ENCODE measurements at regions of chr1 and their contacts with region 1.

Region 1: GRCh38 chr1:155091071-155091709 is 12.6 kb downstream of the EFNA3 start:
- DNase-seq: peak; percentile 81 to 88
- ATAC-seq: peak; percentile 74 to 88 (median 80)
- H3K4me3 ChIP-seq: no peak overlapping the region
- H3K27ac ChIP-seq: no peak overlapping the region
- H3K4me1 ChIP-seq: peaks cover 12% of the 10 kb centered on the region
- H3K27me3 ChIP-seq: no peaks in the 10 kb centered on the region
- CTCF ChIP-seq: peak; percentile 97

Region 2: GRCh38 chr1:155050560-155051341 is 40.4 kb before region 1 on chr1 and contains the start of gene ADAM15:
- intact Hi-C with region 1: no loop called
- DNase-seq: peak; percentile 88 to 93
- ATAC-seq: peak; percentile 87 to 89 (median 88)
- H3K4me3 ChIP-seq: peak within 1 kb of the TSS; percentile 88
- H3K27ac ChIP-seq: peak within 1 kb of the TSS; percentile 86
- H3K4me1 ChIP-seq: peaks cover 23% of the 10 kb centered on the region
- H3K27me3 ChIP-seq: no peaks in the 10 kb centered on the region
- CTCF ChIP-seq: peak; percentile 93
- total RNA-seq, gene ADAM15: 38.4 to 50.9 (median 49.3) TPM

Region 3: GRCh38 chr1:155127105-155127964 is 36.1 kb after region 1 on chr1 and contains the start of gene EFNA1:
- intact Hi-C with region 1: loop called (anchors 5 kb)
- DNase-seq: peak; percentile 70 to 77
- ATAC-seq: peak; percentile 46 to 64 (median 51)
- H3K4me3 ChIP-seq: peak within 1 kb of the TSS; percentile 74
- H3K27ac ChIP-seq: peak within 1 kb of the TSS; percentile 72
- H3K4me1 ChIP-seq: peaks cover 24% of the 10 kb centered on the region
- H3K27me3 ChIP-seq: peaks cover 0 to 31% (median 0%) of the 10 kb centered on the region in 3 donors
- CTCF ChIP-seq: no peak
- total RNA-seq, gene EFNA1: 11.4 to 42.6 (median 33.0) TPM

Region 4: DNA sequence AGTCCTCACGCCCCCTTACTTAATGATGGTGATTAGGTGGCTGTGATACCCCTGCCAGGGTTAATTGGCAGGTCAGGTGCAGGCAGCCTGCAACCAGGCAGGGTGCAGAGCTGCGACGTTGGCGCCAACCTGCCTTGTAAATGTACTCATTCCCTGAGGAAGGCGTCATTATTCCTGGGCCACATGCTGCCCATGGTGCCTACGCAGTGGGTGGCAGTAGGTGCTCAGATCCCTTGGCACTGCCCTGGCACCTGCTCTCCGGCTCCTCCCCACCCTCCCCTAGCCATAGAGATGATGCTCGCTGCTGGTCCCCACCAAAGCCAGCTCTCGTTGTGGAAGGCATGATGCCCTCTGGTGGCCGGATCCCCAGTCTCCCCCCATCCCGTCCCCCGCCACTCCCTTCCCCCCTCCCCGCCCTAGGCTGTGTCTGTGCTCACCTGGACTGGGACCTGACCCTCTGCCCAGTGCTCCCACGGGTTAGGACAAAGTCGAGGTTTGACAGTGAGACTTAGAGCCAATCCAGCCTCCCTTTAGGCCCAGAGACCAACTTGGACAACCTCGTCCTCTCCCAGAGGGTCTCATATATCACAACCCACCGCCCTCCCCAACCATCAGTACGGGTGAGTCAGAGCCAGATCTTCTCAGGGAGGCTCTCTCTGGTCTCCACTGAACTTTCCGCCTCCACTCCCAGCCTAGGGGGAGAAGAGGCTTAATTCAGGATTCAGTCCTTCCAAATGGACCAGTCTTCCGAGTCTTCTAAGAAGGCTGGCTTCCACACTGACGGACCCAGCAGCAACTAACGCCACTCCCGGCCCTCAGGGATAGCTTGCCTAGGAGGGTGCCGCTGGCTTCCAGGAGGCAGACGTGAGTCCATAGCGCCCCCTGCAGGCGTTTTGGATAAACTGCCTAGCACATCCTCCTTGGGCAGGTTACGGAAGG is 76.2 kb after region 1 on chr1:
- intact Hi-C with region 1: loop called (anchors 1 to 2 kb)
- DNase-seq: peak; percentile 90 to 94
- ATAC-seq: peak; percentile 77 to 88 (median 84)
- H3K4me3 ChIP-seq: peak overlapping the region; percentile 12
- H3K27ac ChIP-seq: peak overlapping the region; percentile 55
- H3K4me1 ChIP-seq: peaks cover 16% of the 10 kb centered on the region
- H3K27me3 ChIP-seq: peaks cover 0 to 7% (median 0%) of the 10 kb centered on the region in 3 donors
- CTCF ChIP-seq: peak; percentile 86

Measured in psoas muscle (tissue), 8 donors.